ENCODE measurements at regions of chr1 and their contacts with region 1.

Region 1: GRCh38 chr1:15152318-15153183 is 996 bp upstream of the TMEM51 start:
- DNase-seq: peak; percentile 31
- H3K4me3 ChIP-seq: peak overlapping the region; percentile 58
- CTCF ChIP-seq: peak; percentile 76

Region 2: DNA sequence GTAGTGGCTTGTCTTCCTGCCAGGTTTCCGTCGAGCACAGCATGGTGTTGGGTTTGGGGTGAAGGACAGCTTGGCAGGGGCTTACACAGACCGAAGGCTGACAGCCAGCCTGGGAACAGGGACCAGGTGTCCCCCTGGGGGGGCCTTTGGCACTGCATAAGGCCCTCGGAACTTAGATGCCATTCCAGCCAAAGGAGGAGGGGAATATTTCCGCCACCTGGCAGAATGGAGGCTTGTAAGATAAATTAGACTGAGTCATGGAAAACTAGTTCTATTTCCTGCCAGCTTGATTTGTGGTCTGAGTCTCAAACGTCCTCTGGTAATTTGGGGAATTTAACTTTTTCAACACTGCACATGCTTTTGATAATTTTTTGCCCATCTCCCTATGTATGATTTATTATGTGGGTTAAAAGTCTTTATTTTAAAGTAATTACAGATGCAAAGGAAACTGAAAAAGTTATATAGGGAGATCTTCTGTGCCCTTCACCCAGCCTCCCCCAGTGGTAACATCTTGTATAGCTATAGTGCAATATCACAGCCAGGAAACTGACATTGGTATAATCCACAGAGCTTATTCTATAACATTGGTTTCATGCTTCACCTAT is 10.5 kb before region 1 on chr1:
- CTCF ChIA-PET with region 1: interaction called, 31 read pairs
- POLR2A ChIA-PET with region 1: no interaction called
- DNase-seq: no peak
- H3K4me3 ChIP-seq: no peak overlapping the region
- CTCF ChIP-seq: no peak

Region 3: DNA sequence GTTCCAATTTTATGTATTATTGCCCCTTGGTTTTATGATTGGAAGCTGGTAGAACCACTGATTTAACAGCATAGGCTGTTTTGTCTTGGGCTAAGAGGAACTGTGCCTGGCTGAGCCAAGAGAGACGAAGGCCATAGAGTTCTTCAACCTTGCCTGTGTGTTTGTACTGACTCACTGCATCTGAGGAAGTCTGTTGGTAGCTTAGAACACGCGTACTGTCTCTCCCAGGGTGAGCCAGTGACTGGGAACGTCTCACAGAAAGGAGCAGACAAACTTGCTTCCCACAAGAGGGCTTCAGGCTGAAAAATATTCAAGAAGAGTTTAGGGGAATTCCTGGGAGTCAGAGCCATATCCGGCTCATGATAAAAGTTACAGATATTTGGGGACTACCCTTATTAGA is 15.9 kb after region 1 on chr1:
- CTCF ChIA-PET with region 1: interaction called, 77 read pairs
- POLR2A ChIA-PET with region 1: no interaction called
- DNase-seq: peak; percentile 86
- H3K4me3 ChIP-seq: no peak overlapping the region
- CTCF ChIP-seq: no peak

Region 4: DNA sequence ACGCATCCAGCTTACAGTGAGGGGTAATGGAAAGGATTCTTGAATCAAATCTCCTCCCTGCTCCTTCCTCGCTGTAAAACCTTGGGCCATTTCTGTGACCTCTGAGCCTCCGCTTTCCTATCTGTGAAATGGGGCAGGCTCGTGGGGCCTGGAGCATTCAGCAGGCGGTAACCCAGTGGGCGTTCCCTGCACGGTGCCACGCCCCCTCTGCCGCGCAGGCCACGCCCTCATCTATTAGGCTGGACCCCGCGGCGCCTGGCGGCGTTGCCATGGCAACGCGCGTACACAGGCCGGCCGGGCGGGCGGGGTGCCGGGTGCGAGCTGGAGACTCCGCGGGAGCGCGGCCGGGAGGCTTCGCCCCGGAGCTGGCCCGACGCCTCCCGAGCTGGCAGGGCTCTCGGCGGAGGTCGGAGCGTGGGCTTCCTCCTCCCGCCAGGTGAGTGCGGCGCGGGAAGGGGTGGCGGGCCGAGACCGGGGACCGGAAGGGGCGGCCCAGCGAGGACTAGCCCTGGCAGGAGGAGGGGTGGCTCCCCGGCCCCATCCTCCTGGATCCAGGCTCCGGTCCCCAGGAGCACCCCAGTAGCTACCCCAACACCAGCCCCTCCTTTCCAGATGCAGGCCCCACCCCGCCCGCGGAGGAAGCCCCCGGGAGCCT is 94.5 kb after region 1 on chr1 and contains the start of gene FHAD1:
- CTCF ChIA-PET with region 1: interaction called, 14 read pairs
- POLR2A ChIA-PET with region 1: no interaction called
- DNase-seq: no peak
- H3K4me3 ChIP-seq: peak within 1 kb of the TSS; percentile 41
- CTCF ChIP-seq: no peak

Region 5: DNA sequence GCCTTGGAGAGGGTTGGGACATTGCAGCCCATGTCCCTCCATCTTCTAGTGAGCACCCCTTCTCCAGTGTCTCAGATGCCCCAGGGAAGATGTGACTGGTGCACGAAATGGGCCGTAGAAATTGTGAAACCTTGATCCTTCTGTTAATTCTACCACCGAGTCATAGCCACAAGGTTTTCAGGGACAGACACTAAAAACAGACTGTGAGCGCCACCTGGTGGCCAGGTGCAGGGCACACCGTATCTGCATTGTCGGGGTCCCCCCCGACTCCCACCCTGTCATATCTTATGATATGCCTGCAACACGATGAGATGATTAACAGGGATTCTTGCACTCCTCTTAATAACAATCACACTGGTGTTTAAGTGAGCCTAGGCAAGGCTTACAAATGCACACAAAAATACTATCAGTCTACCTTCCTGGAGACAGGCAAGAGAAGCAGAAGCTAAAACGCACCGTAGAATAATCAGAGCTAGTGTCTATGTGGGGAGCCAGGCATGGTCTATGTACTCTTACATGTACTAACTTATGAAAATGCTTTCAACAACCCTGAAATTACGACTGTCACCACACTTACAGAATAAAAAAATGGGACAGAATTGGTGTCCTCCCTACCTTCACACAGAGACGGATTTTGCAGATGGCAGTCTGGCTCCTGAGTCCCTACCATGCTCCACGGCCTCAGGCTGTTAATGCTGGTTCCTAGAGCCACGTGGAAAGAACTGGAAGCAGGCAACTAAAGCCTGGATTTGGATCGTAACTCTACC is 152.3 kb after region 1 on chr1:
- CTCF ChIA-PET with region 1: interaction called, 15 read pairs
- POLR2A ChIA-PET with region 1: no interaction called
- DNase-seq: no peak
- H3K4me3 ChIP-seq: peak overlapping the region; percentile 16
- CTCF ChIP-seq: peak; percentile 56